Mammary epithelial cell (primary cell): ENCODE measurements at regions of chr16 and their contacts with region 1.

Region 1: GRCh38 chr16:75647492-75648264 is at the starts of genes KARS1 and TERF2IP:
- DNase-seq: peak; percentile 93
- H3K4me3 ChIP-seq: peak within 1 kb of the TSS; percentile 88 to 95 (median 92)
- H3K27ac ChIP-seq: peak within 1 kb of the TSS; percentile 82
- H3K4me1 ChIP-seq: peaks cover 25% of the 10 kb centered on the region
- H3K27me3 ChIP-seq: no peaks in the 10 kb centered on the region
- CTCF ChIP-seq: no peak
- total RNA-seq, gene KARS1: 114 to 162 TPM
- total RNA-seq, gene TERF2IP: 31.7 to 40.3 TPM

Region 2: GRCh38 chr16:75566040-75566810 is 81.5 kb before region 1 on chr16 and contains the start of gene GABARAPL2:
- CTCF ChIA-PET with region 1: interaction called, 4 read pairs
- dilution Hi-C with region 1: no loop called
- in situ Hi-C with region 1: no loop called
- intact Hi-C with region 1: loop called (anchors 5 kb)
- DNase-seq: peak; percentile 70
- H3K4me3 ChIP-seq: peak within 1 kb of the TSS; percentile 73 to 87 (median 78)
- H3K27ac ChIP-seq: peak within 1 kb of the TSS; percentile 69
- H3K4me1 ChIP-seq: peaks cover 11% of the 10 kb centered on the region
- H3K27me3 ChIP-seq: no peaks in the 10 kb centered on the region
- CTCF ChIP-seq: no peak
- total RNA-seq, gene GABARAPL2: 41.2 to 63.2 TPM

Region 3: DNA sequence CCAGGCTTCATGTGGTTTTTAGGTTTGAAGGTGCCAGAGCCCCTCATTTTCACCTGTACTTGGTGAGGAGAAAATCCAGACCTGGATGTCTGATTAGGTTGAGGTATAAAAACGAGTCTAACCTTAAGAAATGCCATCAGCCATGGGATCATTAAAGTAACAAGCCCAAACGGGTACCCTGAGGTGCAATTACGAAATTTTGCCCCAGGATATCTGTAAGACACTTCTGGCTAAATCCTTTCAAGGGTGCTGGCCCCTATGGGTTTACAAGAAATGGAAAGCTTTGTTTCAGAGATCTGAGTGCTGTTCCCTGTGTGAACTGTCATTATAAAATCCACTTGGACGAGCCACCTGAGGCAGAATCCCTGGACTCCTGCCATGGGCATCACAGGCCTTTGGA is 44.4 kb before region 1 on chr16:
- CTCF ChIA-PET with region 1: no interaction called
- dilution Hi-C with region 1: no loop called
- in situ Hi-C with region 1: no loop called
- intact Hi-C with region 1: no loop called
- DNase-seq: no peak
- H3K4me3 ChIP-seq: no peak overlapping the region
- H3K27ac ChIP-seq: no peak overlapping the region
- H3K4me1 ChIP-seq: no peaks in the 10 kb centered on the region
- H3K27me3 ChIP-seq: no peaks in the 10 kb centered on the region
- CTCF ChIP-seq: no peak

Region 4: DNA sequence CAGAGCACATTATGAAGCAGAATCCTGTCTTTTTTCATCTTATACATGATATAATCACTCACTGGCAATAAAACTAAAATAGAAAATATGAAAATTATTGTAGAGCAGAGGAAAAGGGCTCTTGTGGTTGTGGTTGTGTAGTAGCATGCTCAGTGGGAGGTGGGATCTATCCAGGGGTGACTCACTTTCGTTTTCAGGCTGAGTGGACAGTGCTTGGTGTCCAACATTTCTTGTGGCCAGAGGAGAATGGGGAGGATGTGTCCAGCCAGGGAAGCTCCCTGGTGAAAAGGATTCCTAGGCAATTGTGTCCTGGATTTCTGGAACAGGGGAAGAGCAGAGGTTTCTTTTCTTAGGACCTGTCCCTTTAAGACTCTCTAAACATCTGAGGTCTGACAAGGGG is 110.5 kb after region 1 on chr16:
- CTCF ChIA-PET with region 1: no interaction called
- dilution Hi-C with region 1: no loop called
- in situ Hi-C with region 1: loop called in 1 of 2 experiments (anchors 10 kb)
- intact Hi-C with region 1: no loop called
- DNase-seq: no peak
- H3K4me3 ChIP-seq: no peak overlapping the region
- H3K27ac ChIP-seq: no peak overlapping the region
- H3K4me1 ChIP-seq: no peaks in the 10 kb centered on the region
- H3K27me3 ChIP-seq: no peaks in the 10 kb centered on the region
- CTCF ChIP-seq: no peak

Region 5: DNA sequence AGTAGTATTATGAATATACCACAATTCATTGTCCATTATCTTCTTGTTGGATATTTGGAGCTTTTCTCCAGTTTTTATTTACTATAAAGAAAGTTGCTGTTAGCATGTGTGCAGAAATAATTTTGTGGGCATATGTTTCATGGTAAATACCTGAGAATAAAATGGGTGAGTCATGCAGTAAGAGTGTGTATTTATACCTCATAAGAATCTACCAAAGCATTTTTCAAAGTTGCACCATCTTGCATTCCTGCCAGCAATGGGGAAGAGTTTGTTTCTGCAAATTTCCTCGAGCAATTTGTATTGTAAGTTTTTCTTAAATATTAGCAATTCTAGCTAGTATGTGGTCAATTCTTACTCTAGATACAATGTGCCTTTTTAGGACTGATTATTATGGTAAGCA is 1535.5 kb after region 1 on chr16:
- CTCF ChIA-PET with region 1: no interaction called
- dilution Hi-C with region 1: no loop called
- in situ Hi-C with region 1: no loop called
- intact Hi-C with region 1: loop called (anchors 10 kb)
- DNase-seq: peak; percentile 10
- H3K4me3 ChIP-seq: no peak overlapping the region
- H3K27ac ChIP-seq: no peak overlapping the region
- H3K4me1 ChIP-seq: no peaks in the 10 kb centered on the region
- H3K27me3 ChIP-seq: no peaks in the 10 kb centered on the region
- CTCF ChIP-seq: no peak